ENCODE measurements at regions of chr1 and their contacts with region 1.

Region 1: GRCh38 chr1:185317034-185317885 is at the start of gene IVNS1ABP:
- DNase-seq: peak; percentile 98
- H3K4me3 Mint-ChIP-seq: peak within 1 kb of the TSS; percentile 85
- H3K27ac Mint-ChIP-seq: peak within 1 kb of the TSS; percentile 94
- H3K4me1 Mint-ChIP-seq: peaks cover 36% of the 10 kb centered on the region
- H3K27me3 Mint-ChIP-seq: no peaks in the 10 kb centered on the region
- CTCF ChIP-seq: no peak
- total RNA-seq, gene IVNS1ABP: 67.4 and 92.0 TPM in 2 replicates

Region 2: DNA sequence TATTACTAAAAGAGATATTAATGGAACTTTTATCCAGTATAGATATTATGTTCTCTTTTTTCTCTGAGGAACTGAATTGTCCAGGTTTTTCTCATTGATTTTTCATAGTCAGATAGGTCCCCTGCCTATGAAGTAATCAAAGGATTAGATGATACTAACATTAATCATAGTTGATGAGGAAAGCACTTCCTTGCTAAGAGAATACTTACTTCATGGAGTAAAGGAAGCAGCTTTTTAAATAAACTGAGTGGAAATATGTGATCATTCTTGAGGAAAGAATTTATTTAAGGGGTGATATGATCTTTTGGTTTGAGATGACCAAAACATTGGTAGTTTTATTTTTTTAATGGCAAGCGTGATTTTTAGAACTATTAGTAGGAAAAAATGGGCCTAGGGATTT is 101.3 kb before region 1 on chr1:
- CTCF ChIA-PET with region 1: no interaction called
- POLR2A ChIA-PET with region 1: no interaction called
- intact Hi-C with region 1: no loop called
- DNase-seq: no peak
- H3K4me3 Mint-ChIP-seq: no peak overlapping the region
- H3K27ac Mint-ChIP-seq: no peak overlapping the region
- H3K4me1 Mint-ChIP-seq: no peaks in the 10 kb centered on the region
- H3K27me3 Mint-ChIP-seq: no peaks in the 10 kb centered on the region
- CTCF ChIP-seq: no peak

Region 3: GRCh38 chr1:185257947-185258203 is 59.4 kb before region 1 on chr1:
- CTCF ChIA-PET with region 1: no interaction called
- POLR2A ChIA-PET with region 1: no interaction called
- intact Hi-C with region 1: no loop called
- DNase-seq: no peak
- H3K4me3 Mint-ChIP-seq: no peak overlapping the region
- H3K27ac Mint-ChIP-seq: no peak overlapping the region
- H3K4me1 Mint-ChIP-seq: no peaks in the 10 kb centered on the region
- H3K27me3 Mint-ChIP-seq: no peaks in the 10 kb centered on the region
- CTCF ChIP-seq: no peak

Region 4: DNA sequence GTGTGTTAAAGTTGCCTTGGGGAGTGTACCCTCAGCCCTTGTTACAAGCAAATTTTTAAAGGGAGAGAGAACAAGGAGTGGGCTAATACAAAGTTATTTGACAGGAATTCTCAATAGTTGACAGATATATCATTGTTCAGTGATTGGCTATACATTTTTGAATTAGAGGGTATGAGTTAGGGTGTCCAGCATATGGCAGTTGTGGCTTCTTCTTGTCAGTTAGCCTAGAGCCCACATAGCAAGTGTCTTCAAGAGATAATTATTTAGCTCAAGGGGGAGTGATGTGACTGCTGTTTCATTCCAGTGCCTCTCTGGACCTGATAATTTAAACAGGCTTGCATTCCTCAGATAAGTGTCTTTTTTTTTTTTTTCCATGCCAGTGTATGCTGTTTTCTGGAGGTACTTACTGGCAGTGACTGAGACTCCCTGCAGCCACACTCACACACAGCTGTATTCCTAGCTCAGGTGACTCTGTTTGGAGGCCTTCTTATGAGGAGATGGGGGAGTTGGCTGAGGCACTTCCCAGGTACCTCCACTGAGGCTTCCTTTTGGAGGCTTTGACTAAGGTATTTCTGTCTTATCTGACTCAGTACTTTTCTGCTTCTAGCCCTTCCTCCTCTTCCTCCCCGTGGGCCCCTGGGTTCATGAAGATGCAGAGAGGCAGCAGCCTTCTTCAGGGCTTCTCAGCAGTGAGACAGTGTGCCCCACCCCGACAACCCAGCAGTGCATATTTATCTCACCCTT is 32.6 kb before region 1 on chr1:
- CTCF ChIA-PET with region 1: no interaction called
- POLR2A ChIA-PET with region 1: no interaction called
- intact Hi-C with region 1: no loop called
- DNase-seq: no peak
- H3K4me3 Mint-ChIP-seq: no peak overlapping the region
- H3K27ac Mint-ChIP-seq: no peak overlapping the region
- H3K4me1 Mint-ChIP-seq: peaks cover 2% of the 10 kb centered on the region
- H3K27me3 Mint-ChIP-seq: no peaks in the 10 kb centered on the region
- CTCF ChIP-seq: no peak

Region 5: DNA sequence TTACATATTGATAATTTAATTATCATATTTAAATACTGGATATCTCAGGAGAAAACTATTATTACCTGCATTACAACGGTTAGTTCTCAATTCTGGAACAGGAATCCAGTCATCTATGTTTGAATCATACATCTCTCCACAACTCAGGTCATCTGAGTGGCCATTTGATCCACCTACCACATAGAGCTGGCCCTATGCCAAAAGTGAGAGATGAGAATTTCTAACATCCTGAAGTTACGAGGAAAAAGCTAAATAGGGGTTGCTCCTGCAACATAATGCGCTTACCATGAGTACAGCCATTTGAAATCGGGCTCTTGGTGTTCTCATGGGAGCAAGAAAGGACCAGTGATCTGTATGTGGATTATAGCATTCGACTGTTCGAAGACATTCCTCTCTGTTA is 17.1 kb before region 1 on chr1:
- CTCF ChIA-PET with region 1: interaction called, 7 read pairs
- POLR2A ChIA-PET with region 1: interaction called, 20 read pairs
- intact Hi-C with region 1: no loop called
- DNase-seq: no peak
- H3K4me3 Mint-ChIP-seq: no peak overlapping the region
- H3K27ac Mint-ChIP-seq: no peak overlapping the region
- H3K4me1 Mint-ChIP-seq: no peaks in the 10 kb centered on the region
- H3K27me3 Mint-ChIP-seq: no peaks in the 10 kb centered on the region
- CTCF ChIP-seq: no peak

Region 6: GRCh38 chr1:185345913-185346720 is 28.9 kb after region 1 on chr1:
- CTCF ChIA-PET with region 1: interaction called, 6 read pairs
- POLR2A ChIA-PET with region 1: interaction called, 74 read pairs
- intact Hi-C with region 1: no loop called
- DNase-seq: no peak
- H3K4me3 Mint-ChIP-seq: no peak overlapping the region
- H3K27ac Mint-ChIP-seq: no peak overlapping the region
- H3K4me1 Mint-ChIP-seq: peaks cover 23% of the 10 kb centered on the region
- H3K27me3 Mint-ChIP-seq: no peaks in the 10 kb centered on the region
- CTCF ChIP-seq: no peak

Region 7: DNA sequence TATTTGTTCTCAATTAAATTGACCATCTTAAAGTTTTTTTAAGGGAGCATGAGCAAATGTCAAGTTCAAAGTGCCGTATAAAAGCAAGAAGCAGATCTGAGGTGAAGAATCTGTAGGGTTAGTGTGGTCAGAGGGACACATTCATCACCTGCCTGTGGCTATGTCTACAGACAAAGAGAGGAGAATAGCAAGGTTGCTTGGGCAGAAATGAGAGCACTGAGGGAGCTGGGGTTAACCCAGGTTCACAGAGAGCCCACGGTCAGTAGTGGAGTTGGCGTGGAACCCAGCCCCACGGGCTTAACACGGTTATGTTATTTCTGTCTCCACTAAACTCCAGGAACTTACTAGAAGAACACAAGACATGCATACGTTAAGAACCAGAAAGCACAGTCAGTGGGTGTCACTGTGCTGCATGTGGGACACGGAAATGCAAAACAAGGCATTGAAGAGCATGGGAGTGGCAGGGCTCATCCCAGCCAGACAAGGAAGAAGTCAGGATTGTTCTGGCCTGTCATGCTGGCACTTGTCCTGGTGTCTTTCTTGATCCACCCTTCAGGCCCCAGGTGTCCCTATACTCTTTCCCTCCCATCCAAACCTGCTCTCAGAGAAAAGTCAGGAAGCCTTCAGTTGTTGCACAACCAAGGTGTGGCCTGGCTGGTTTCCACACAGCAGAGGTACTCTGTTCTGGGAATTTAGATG is 95.3 kb after region 1 on chr1:
- CTCF ChIA-PET with region 1: interaction called, 3 read pairs
- POLR2A ChIA-PET with region 1: interaction called, 24 read pairs
- intact Hi-C with region 1: no loop called
- DNase-seq: peak; percentile 93
- H3K4me3 Mint-ChIP-seq: no peak overlapping the region
- H3K27ac Mint-ChIP-seq: peak overlapping the region; percentile 14
- H3K4me1 Mint-ChIP-seq: peaks cover 32% of the 10 kb centered on the region
- H3K27me3 Mint-ChIP-seq: no peaks in the 10 kb centered on the region
- CTCF ChIP-seq: no peak

Region 8: DNA sequence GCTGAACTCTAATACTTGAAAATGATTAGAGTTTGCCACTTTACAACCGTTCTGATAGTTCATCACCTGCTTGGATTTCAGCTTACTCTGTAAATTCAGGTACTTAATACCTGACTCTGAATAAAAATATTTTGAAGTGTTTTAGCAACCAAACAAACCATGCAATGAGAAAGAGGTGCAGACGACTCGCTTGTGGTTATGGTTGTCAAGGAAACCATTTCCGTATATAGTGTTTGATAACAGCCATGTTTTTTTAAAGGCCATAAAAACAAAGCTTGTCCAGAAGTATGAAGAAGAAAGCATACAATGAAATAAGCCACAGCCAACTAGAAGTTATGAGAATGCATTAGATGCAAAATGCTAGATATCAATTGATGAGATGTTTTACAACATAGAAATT is 249.7 kb after region 1 on chr1:
- CTCF ChIA-PET with region 1: interaction called, 5 read pairs
- POLR2A ChIA-PET with region 1: interaction called, 22 read pairs
- intact Hi-C with region 1: loop called (anchors 2 kb)
- DNase-seq: peak; percentile 77
- H3K4me3 Mint-ChIP-seq: no peak overlapping the region
- H3K27ac Mint-ChIP-seq: peak overlapping the region; percentile 96
- H3K4me1 Mint-ChIP-seq: peaks cover 53% of the 10 kb centered on the region
- H3K27me3 Mint-ChIP-seq: no peaks in the 10 kb centered on the region
- CTCF ChIP-seq: no peak

Region 9: DNA sequence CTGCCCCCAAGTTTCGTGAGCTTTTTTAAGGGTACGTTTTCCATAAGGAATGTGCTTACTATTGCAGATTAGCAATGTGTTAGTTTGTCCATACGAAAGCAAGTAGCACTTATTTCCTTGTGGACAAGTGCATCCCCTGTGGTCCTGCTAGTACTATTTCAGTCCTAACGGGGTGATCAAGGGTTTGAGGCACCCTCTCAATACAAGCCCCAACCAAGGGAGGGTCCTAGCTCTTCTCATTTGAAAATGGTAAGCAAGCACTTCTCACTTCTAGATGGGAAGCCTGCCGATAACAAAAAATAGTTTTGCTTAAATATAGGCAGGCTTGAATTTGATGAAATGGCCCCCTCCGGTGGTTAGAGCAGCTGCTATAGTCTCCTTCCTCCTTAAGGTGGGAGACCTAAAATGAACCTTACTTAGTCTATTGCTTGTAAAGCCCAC is 352.9 kb after region 1 on chr1:
- CTCF ChIA-PET with region 1: interaction called, 53 read pairs
- POLR2A ChIA-PET with region 1: interaction called, 23 read pairs
- intact Hi-C with region 1: loop called (anchors 1 kb)
- DNase-seq: peak; percentile 69
- H3K4me3 Mint-ChIP-seq: no peak overlapping the region
- H3K27ac Mint-ChIP-seq: no peak overlapping the region
- H3K4me1 Mint-ChIP-seq: no peaks in the 10 kb centered on the region
- H3K27me3 Mint-ChIP-seq: no peaks in the 10 kb centered on the region
- CTCF ChIP-seq: peak; percentile 78